Activated naive CD4-positive, alpha-beta T cell treated with anti-CD3 and anti-CD28 coated beads, Interleukin-2, amount 10 ng/mL, durations not matched to agents 7 days and 5 days (primary cell): ENCODE measurements at regions of chr3 and their contacts with region 1.

Region 1: DNA sequence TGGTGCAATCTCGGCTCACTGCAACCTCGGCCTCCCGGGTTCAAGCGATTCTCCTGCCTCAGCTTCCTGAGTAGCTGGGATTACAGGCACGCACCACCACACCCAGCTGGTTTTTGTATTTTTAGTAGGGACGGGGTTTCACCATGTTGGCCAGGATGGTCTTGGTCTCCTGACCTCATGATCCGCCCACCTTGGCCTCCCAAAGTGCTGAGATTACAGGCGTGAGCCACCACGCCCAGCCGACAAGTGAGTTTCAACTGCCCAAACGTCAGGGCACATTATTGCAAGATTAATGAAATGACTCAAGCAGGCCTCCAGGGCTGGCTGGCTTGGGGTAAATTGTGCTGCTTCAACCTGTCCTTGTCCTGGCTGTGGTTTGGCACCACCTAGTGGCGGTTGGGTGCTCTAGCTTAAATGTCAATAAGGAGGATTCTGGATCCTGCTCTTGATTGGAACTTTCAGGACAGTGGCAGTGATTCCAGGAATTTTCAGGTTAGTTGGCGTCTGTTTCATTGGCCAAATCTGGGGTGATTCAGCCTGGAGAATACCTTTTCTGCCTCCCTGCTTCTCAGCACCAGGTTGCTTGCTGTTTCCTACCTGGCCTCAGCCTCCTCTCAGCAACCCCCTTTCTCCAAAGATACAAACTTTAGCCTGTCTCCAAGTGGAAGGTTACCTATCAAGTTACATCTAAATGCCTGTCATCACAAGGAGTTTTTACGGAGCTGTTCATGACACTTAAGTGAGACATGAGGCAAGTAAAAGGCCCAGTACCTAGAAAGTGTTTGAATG is 32.4 kb upstream of the SACM1L start:
- DNase-seq: peak; percentile 91
- H3K4me3 Mint-ChIP-seq: no peak overlapping the region
- H3K27ac Mint-ChIP-seq: peak overlapping the region; percentile 52
- H3K4me1 Mint-ChIP-seq: peaks cover 18% of the 10 kb centered on the region
- H3K27me3 Mint-ChIP-seq: no peaks in the 10 kb centered on the region

Region 2: DNA sequence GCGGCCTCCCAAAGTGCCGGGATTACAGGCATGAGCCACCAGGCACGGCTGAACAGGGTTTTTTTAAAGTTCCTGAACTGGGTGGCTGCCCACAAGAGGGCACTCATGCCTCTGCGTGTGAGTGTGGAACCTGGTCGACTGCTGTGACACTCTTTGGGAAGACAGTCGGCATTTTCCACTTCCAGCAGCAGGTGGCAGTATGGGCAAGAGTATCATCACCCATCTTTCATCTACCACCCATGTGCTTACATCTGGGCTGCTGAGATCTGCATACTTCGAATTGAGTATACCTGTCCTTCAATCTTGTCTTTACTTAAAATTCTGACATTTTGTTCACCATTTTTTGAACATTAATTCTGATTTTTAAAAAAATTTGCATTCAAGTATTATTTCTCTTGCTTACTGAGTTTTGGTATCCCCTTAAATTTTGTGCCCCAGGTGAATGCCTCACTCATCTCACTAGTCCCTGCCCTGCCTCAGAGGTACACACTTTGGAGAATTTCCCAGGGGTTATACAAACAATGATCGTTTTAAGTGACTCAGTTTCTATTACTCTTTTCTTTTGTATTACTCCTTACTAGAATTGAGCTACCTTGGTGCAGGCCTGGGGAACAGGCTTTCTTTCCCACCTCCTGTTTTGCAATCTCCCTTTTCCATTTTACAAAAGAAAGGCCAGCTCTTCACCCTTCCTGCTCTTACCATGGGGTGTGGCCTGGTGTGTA is 618.9 kb before region 1 on chr3:
- CTCF ChIA-PET with region 1: interaction called, 12 read pairs
- DNase-seq: peak; percentile 96
- H3K4me3 Mint-ChIP-seq: no peak overlapping the region
- H3K27ac Mint-ChIP-seq: no peak overlapping the region
- H3K4me1 Mint-ChIP-seq: peaks cover 59% of the 10 kb centered on the region
- H3K27me3 Mint-ChIP-seq: peaks cover 71% of the 10 kb centered on the region

Region 3: DNA sequence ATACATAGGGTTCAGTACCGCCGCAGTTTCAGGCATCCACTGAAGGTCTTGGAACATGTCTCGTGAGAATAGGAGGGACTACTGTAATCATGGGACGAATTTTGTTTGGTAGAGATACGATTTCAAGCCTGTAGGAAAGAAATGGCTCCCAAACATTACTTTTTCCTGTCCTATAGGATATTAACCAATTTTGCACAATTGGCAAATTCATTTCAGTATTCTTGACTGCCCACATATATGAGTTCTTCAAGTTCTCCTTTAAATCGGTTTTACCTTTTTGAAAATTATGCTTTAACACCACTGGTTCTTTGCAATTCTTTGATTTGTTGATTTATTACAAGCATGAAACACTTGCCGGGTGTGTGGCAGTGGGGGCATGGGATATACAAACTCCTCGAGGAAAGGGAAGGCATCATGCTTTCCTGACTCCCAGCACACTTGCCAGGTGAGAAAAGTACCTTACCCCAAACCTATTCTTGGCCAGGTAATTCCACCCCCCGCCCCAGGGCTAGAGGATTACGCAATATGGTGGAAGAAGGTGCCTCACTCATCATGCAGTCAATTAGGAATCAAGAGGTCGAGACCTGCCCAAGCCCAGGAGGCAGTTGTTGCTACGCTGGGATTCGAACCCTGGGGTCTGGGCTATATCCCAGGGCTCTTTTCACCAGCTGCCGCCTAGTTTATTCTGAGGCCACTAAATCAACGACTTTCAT is 269.0 kb before region 1 on chr3:
- CTCF ChIA-PET with region 1: no interaction called
- DNase-seq: no peak
- H3K4me3 Mint-ChIP-seq: peak overlapping the region; percentile 90
- H3K27ac Mint-ChIP-seq: peak overlapping the region; percentile 28
- H3K4me1 Mint-ChIP-seq: peaks cover 27% of the 10 kb centered on the region
- H3K27me3 Mint-ChIP-seq: peaks cover 24% of the 10 kb centered on the region

Region 4: DNA sequence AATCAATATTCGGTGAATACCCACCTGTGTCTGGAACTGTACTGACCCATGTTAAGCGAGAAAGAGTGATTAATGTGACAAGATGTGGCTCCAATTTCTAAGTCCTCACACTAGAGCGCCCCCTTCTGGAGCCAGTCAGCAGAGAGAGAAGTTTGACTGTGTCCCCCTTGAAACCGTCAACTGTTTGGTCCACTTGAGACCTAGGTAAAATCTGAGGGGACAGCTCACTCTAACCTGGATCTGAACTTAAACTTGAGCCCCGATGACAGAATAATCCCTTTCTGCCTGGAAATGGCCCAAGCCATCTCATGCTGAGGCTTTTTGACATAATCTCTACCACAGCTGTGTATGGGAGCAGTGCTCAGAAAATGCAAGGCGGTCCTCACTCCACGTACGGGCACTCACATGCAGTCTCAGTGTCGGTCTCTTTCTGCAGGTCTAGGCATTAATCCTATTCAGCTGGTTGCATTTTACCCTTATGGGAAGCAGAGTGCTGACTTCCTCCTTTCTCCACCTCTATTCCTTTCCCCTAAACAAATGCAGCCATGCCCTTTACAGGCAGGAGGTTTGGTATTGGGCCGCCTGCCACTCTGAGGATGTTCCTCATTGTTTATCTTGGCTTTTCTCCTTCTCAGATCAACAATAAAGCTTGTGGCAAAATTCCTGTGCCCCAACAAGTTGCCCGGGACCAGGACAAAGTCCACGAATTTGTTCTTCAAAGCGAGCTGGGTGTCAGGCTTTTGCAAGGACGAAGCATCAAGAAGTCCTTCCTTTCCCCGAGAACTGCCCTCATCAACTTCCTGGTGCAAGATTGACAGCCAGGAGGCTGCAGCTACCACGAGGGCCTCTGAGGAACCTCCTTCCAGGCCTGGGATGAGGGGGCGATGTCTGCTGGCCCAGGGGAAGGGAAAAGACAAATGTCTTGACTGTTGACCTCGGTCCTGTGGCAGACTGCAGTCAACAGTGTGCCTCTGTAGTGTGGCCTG is 109.8 kb before region 1 on chr3:
- CTCF ChIA-PET with region 1: interaction called, 12 read pairs
- DNase-seq: peak; percentile 43
- H3K4me3 Mint-ChIP-seq: no peak overlapping the region
- H3K27ac Mint-ChIP-seq: peak overlapping the region; percentile 2
- H3K4me1 Mint-ChIP-seq: no peaks in the 10 kb centered on the region
- H3K27me3 Mint-ChIP-seq: no peaks in the 10 kb centered on the region

Region 5: GRCh38 chr3:45635477-45636256 is 21.1 kb before region 1 on chr3:
- CTCF ChIA-PET with region 1: interaction called, 12 read pairs
- DNase-seq: no peak
- H3K4me3 Mint-ChIP-seq: no peak overlapping the region
- H3K27ac Mint-ChIP-seq: no peak overlapping the region
- H3K4me1 Mint-ChIP-seq: peaks cover 24% of the 10 kb centered on the region
- H3K27me3 Mint-ChIP-seq: no peaks in the 10 kb centered on the region

Region 6: DNA sequence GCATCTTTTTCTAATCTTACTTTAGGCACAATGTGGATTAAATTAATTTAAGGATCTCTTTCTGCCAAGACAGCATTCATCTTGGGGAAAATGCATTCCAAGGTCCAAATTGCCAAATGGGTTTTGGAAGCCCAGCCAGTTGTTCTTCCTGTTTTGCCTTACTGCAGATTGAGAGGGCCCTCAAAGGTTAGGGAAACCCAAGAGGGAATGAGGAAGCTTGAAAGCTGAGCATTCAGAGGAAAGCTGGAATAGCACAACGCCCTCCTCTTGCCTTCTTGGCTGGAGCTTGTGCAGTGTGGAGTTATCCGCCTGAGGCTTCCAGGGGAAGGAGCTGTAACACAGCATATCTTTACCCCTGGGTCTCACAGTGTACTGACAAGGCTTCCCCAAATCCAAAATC is 14.2 kb after region 1 on chr3:
- CTCF ChIA-PET with region 1: interaction called, 17 read pairs
- DNase-seq: no peak
- H3K4me3 Mint-ChIP-seq: no peak overlapping the region
- H3K27ac Mint-ChIP-seq: no peak overlapping the region
- H3K4me1 Mint-ChIP-seq: peaks cover 40% of the 10 kb centered on the region
- H3K27me3 Mint-ChIP-seq: no peaks in the 10 kb centered on the region

Region 7: GRCh38 chr3:45741742-45742141 is 85.0 kb after region 1 on chr3:
- CTCF ChIA-PET with region 1: no interaction called
- DNase-seq: peak; percentile 43
- H3K4me3 Mint-ChIP-seq: no peak overlapping the region
- H3K27ac Mint-ChIP-seq: peak overlapping the region; percentile 64
- H3K4me1 Mint-ChIP-seq: peaks cover 24% of the 10 kb centered on the region
- H3K27me3 Mint-ChIP-seq: no peaks in the 10 kb centered on the region